A673 (cell line): ENCODE measurements at regions of chr6 and their contacts with region 1.

Region 1: GRCh38 chr6:43421831-43422230 is 5.5 kb upstream of the ABCC10 start:
- DNase-seq: no peak
- H3K4me3 ChIP-seq: no peak overlapping the region
- H3K27ac ChIP-seq: no peak overlapping the region
- H3K4me1 ChIP-seq: no peaks in the 10 kb centered on the region
- H3K27me3 ChIP-seq: no peaks in the 10 kb centered on the region
- CTCF ChIP-seq: no peak

Region 2: DNA sequence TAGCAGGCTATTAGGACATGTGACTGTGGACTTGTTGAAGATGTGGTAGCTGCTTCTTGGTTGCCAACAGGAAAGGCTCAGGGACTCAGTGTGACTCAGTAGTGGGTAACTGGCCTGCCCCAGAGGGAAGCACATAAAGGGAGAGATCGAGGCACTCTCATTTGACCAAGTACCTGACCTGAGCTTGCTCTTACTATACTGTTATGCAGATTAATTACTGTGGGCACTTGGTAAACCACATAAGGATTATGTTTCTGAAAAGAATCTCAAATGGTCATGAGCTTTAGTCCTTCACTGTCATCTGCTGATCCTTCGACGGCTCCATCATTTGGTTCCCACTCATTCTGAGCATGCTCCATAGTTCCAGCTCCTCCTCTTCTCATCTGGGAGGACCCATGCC is 590.6 kb before region 1 on chr6:
- CTCF ChIA-PET with region 1: no interaction called
- POLR2A ChIA-PET with region 1: interaction called, 14 read pairs
- intact Hi-C with region 1: no loop called
- DNase-seq: no peak
- H3K4me3 ChIP-seq: no peak overlapping the region
- H3K27ac ChIP-seq: no peak overlapping the region
- H3K4me1 ChIP-seq: no peaks in the 10 kb centered on the region
- H3K27me3 ChIP-seq: no peaks in the 10 kb centered on the region
- CTCF ChIP-seq: no peak

Region 3: GRCh38 chr6:43608310-43608763 is 186.5 kb after region 1 on chr6:
- CTCF ChIA-PET with region 1: no interaction called
- POLR2A ChIA-PET with region 1: no interaction called
- intact Hi-C with region 1: no loop called
- DNase-seq: peak; percentile 88
- H3K4me3 ChIP-seq: no peak overlapping the region
- H3K27ac ChIP-seq: no peak overlapping the region
- H3K4me1 ChIP-seq: peaks cover 4% of the 10 kb centered on the region
- H3K27me3 ChIP-seq: no peaks in the 10 kb centered on the region
- CTCF ChIP-seq: peak; percentile 90